Common myeloid progenitor, CD34-positive (primary cell): ENCODE measurements at regions of chr17 and their contacts with region 1.

Region 1: DNA sequence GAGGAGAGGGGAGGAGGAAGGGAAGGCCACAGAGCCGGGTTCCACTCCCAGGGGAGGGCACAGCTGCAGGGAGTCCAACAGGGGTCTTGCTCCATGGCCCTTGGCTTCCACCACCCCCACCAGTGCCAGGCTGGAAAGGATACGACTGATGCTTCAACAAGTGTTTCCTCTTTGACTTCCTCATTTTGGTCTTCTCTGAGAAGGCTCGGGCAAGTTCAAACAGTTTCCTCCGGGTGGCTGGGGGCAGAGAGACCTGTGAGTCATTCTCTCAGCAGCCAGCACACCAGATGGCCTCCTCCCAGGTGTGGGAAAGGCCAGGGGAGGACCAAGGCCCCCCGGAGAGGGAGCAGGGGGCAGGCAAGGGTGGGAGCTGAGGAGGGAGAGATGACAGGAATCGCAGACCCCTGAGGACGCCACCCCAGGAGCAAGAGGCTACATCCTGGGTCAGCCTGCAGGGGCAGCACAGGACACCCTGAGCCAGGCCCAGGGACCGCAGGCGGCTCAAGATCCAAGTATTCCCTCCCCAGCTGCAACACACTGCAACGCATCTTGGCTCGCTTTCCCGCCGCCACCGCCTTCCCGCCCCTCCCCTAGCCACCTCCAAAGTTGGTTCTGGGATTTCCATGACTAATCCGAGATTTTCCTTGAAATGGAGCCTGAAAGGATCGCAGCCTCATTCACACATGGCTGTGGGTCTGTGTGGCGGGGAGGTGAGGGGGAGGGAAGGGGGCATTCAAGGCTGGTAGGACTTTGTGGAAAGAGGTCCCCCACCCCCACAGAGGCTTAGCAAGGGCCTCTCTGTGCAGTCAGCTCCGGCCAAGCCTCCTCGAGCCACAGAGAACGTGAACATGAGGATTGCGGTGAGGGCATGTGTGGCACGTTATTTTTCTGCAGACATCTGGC is 18.4 kb upstream of the MRPS23 start:
- DNase-seq: peak; percentile 94 to 99 (median 99)
- H3K4me3 ChIP-seq: peak overlapping the region in 3 of 7 experiments; percentile 8 to 39 (median 17)
- H3K27ac ChIP-seq: peak overlapping the region; percentile 64 to 79
- H3K4me1 ChIP-seq: peaks cover 6 to 75% (median 72%) of the 10 kb centered on the region in 4 experiments
- H3K27me3 ChIP-seq: no peaks in the 10 kb centered on the region

Region 2: GRCh38 chr17:57849874-57850754 is 18.1 kb before region 1 on chr17 and contains the start of gene MRPS23:
- CTCF ChIA-PET with region 1: interaction called, 252 read pairs
- POLR2A ChIA-PET with region 1: interaction called, 3 read pairs
- DNase-seq: peak; percentile 99 to 100 (median 99)
- H3K4me3 ChIP-seq: peak within 1 kb of the TSS; percentile 47 to 96 (median 87)
- H3K27ac ChIP-seq: peak within 1 kb of the TSS; percentile 80 to 92
- H3K4me1 ChIP-seq: peaks cover 14 to 50% (median 36%) of the 10 kb centered on the region in 4 experiments
- H3K27me3 ChIP-seq: no peaks in the 10 kb centered on the region

Region 3: GRCh38 chr17:57892146-57892828 is 24.0 kb after region 1 on chr17:
- CTCF ChIA-PET with region 1: interaction called, 37 read pairs
- POLR2A ChIA-PET with region 1: interaction called, 3 read pairs
- DNase-seq: peak; percentile 72 to 83 (median 77)
- H3K4me3 ChIP-seq: peak overlapping the region in 2 of 7 experiments; percentile 31 to 52
- H3K27ac ChIP-seq: peak overlapping the region in 1 of 2 experiments; percentile 69
- H3K4me1 ChIP-seq: peaks cover 0 to 54% (median 43%) of the 10 kb centered on the region in 4 experiments
- H3K27me3 ChIP-seq: no peaks in the 10 kb centered on the region